Activated naive CD4-positive, alpha-beta T cell treated with anti-CD3 and anti-CD28 coated beads for 36 hours (primary cell): ENCODE measurements at regions of chr15 and their contacts with region 1.

Region 1: DNA sequence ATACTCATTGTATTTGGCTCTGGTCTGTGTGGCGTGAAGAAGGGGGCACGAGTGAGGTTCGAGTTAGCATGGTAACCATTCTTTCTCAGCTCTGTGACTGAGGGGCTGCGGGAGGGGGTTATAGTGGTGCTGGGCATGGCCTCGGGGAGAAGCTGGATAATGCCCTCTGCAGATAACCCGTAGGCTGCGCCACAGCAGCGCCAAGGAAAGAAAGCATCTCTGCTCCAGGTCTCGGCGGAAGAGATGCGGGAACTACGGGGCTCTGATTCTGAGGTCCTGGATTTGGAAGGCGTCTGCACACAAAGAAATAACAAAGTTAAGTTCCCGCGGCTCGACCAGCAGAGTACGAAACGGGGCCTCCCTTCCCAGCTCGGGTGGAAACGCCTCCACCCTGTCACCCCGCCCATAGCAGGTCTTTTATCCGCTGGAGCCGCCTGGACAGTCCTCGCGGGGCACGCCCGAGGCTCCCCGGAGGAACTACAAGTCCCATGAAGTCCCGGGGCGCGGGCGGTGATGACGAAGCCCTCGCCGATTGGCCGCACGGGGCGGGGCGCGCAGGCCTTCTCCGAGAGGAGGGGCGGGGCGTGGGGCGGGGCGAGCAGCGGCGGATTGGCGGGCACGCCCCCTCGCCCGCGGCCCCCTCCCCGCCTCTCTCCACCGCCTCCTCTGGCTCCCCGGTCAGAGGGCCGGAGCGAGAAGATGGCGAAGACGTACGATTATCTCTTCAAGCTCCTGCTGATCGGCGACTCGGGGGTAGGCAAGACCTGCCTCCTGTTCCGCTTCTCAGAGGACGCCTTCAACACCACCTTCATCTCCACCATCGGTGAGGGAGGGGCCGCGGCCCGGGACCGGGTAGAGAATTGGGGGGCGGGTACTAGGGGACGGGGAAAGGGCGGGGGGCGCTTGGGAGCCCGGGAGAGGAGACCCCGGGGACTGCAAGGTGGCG is at the start of gene RAB8B:
- DNase-seq: peak; percentile 98
- H3K4me3 Mint-ChIP-seq: peak within 1 kb of the TSS; percentile 99
- H3K27ac Mint-ChIP-seq: peak within 1 kb of the TSS; percentile 99
- H3K4me1 Mint-ChIP-seq: peaks cover 42% of the 10 kb centered on the region
- H3K27me3 Mint-ChIP-seq: no peaks in the 10 kb centered on the region
- total RNA-seq, gene RAB8B: 91.5 to 93.1 TPM

Region 2: DNA sequence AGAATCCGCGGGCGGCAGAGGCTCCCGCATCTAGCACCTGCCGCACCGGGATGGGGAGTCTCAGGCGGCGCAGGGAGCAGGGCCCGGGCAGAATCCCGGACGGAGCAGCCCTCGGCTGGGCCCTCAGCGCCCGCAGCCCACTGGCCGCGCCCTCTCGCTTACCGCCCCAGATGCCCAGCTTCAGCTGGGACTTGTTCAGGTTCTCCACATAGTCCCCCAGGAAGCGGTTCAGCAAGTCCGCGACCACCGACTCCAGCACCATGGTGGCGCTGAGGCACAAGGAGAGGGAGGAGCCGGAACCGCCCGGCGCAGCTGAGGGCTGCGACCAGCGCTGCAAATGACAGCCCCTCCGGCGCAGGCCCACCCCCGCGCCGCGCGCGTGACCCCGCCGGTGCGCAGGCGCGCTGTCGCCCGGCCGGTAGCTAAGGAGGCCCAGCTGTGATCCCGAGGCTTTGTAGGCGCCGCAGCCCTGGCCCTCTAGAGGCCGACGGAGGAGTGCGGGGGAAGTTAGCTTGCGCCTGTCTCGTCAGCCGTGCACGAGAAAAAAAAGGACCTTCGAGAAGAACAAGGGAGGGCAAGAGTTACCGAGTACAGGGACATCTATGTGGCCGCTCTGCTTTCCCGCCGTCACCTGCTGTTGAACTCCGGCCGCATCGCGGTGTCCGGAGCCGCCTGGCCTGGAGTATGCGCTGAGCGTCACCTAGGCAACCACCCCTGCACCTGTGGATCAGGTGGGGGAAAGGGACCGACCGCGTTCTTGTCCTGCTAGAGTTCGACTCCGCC is 1128.9 kb before region 1 on chr15 and contains the start of gene VPS13C:
- CTCF ChIA-PET with region 1: no interaction called
- intact Hi-C with region 1: loop called (anchors 10 kb)
- DNase-seq: peak; percentile 90
- H3K4me3 Mint-ChIP-seq: peak within 1 kb of the TSS; percentile 88
- H3K27ac Mint-ChIP-seq: peak within 1 kb of the TSS; percentile 86
- H3K4me1 Mint-ChIP-seq: peaks cover 49% of the 10 kb centered on the region
- H3K27me3 Mint-ChIP-seq: no peaks in the 10 kb centered on the region
- total RNA-seq, gene VPS13C: 37.4 to 38.0 TPM

Region 3: DNA sequence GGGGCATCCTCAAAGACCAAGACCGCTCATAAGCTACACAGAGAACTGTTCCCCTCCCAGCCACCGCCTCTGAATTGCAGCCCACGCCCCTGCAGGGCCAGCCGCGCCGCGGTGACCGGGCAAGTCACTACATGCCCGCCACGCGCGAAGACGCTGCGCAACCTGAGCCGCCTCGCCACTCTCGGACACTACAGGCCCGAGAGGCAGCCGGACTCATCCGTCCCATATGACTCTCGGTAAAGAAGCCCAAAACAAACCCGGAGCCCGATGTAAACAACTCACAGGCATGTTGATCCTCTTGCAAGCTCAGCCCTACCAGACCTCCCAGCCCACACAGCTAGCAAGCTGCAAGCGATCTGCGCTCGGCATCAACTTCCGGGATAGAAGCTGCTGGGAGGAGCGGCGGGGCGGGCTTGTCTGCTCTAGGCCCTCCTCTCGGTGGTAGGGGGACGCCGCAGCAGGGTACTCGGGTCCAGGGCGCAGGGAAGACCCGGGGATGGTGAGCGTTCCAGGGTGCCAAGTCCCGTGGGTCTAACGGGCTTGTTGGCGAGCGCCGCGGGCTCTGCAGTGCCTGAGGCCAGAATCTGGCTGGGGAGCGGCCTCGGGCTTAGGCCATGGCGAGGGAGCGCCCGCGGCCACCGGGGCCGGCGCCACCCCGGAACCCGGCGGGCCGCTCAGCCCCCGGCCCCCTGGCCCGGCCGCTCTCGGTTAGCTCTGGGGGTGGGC is 31.9 kb before region 1 on chr15 and contains the start of gene RPS27L:
- CTCF ChIA-PET with region 1: interaction called, 6 read pairs
- intact Hi-C with region 1: loop called (anchors 1 kb)
- DNase-seq: peak; percentile 93
- H3K4me3 Mint-ChIP-seq: peak within 1 kb of the TSS; percentile 99
- H3K27ac Mint-ChIP-seq: peak within 1 kb of the TSS; percentile 98
- H3K4me1 Mint-ChIP-seq: peaks cover 18% of the 10 kb centered on the region
- H3K27me3 Mint-ChIP-seq: no peaks in the 10 kb centered on the region
- total RNA-seq, gene RPS27L: 220 to 222 TPM

Region 4: GRCh38 chr15:63212050-63213004 is 23.1 kb after region 1 on chr15:
- CTCF ChIA-PET with region 1: interaction called, 9 read pairs
- intact Hi-C with region 1: loop called (anchors 1 kb)
- DNase-seq: peak; percentile 29
- H3K4me3 Mint-ChIP-seq: peak overlapping the region; percentile 57
- H3K27ac Mint-ChIP-seq: peak overlapping the region; percentile 97
- H3K4me1 Mint-ChIP-seq: peaks cover 89% of the 10 kb centered on the region
- H3K27me3 Mint-ChIP-seq: no peaks in the 10 kb centered on the region

Region 5: GRCh38 chr15:63362196-63362595 is 173.0 kb after region 1 on chr15:
- CTCF ChIA-PET with region 1: no interaction called
- intact Hi-C with region 1: no loop called
- DNase-seq: no peak
- H3K4me3 Mint-ChIP-seq: no peak overlapping the region
- H3K27ac Mint-ChIP-seq: no peak overlapping the region
- H3K4me1 Mint-ChIP-seq: no peaks in the 10 kb centered on the region
- H3K27me3 Mint-ChIP-seq: no peaks in the 10 kb centered on the region

Region 6: DNA sequence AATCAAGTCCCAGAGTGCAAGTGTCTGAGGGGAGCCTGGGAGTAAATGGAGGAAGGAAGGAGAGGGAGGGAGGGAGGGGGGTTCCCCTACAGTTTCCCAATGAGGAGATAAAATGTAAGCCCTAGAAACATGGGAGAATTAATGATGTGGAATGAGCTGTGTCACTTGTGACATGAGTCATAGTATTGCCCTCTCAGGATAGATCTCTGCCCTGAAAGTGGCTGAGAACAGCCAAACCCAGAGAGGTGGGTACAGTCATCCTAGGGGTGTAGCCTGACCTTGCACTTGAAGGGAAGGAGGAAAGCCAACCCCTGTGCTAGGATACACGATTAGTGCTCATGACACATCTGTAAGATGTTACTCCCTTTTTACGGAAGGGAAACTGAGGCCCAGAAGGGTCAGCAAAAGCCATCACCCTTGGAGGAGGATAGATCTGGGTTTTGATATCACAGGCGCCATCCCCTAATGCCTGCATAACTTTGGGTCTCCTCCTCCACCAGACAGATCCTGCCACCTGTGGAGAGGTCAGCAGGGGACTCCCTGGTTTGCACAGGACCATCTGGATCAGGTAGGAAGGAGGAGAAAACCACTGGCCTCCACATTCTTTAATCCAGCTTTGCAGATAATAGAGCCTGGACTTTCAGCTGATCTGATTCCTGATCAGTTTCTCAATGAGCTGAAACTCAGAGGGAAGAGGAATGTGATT is 292.1 kb after region 1 on chr15:
- CTCF ChIA-PET with region 1: no interaction called
- intact Hi-C with region 1: loop called (anchors 5 kb)
- DNase-seq: peak; percentile 73
- H3K4me3 Mint-ChIP-seq: no peak overlapping the region
- H3K27ac Mint-ChIP-seq: peak overlapping the region; percentile 89
- H3K4me1 Mint-ChIP-seq: peaks cover 81% of the 10 kb centered on the region
- H3K27me3 Mint-ChIP-seq: no peaks in the 10 kb centered on the region

Region 7: DNA sequence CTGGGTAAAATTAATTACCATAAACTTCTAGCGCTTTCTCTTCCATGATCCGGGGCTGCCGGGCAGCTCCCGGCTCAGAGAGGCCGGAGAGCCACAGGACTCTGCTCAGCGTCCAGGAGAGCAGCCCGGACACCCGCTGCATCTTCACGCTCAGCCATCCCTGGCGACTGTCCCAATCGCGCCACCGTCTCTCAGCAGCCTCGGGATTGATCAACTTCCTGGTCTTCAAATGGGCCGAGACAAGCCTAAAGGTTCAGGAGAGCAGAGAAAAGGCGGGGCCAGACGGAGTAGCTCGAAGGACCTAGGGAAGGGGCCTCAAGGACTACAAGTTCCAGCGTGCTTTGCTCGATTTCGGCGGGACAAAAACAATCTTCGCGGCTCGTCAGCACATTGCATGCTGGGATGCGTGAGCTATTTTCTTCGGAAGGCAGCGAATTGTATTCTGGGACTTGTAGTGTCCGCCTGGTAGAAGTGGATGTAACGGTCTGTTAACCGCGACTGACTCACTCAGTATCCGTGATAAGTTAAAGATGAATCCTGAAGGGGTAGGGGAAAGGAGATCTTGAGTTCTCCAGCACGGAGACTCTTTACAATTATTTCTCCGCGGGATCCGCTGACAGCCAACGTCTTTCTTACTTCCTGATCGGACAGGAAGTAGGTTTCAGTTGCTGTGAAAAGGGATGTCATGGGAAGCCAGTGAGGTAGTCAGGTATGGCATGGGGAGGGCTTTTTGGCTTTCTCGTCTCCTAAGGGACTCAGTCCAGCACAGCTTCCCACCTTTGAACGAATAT is 904.6 kb after region 1 on chr15 and contains the start of gene CIAO2A:
- CTCF ChIA-PET with region 1: no interaction called
- intact Hi-C with region 1: loop called (anchors 1 kb)
- DNase-seq: peak; percentile 99
- H3K4me3 Mint-ChIP-seq: peak within 1 kb of the TSS; percentile 98
- H3K27ac Mint-ChIP-seq: peak within 1 kb of the TSS; percentile 97
- H3K4me1 Mint-ChIP-seq: peaks cover 62% of the 10 kb centered on the region
- H3K27me3 Mint-ChIP-seq: no peaks in the 10 kb centered on the region
- total RNA-seq, gene CIAO2A: 105 TPM